HCT116 (cell line): ENCODE measurements at regions of chr12 and their contacts with region 1.

Region 1: DNA sequence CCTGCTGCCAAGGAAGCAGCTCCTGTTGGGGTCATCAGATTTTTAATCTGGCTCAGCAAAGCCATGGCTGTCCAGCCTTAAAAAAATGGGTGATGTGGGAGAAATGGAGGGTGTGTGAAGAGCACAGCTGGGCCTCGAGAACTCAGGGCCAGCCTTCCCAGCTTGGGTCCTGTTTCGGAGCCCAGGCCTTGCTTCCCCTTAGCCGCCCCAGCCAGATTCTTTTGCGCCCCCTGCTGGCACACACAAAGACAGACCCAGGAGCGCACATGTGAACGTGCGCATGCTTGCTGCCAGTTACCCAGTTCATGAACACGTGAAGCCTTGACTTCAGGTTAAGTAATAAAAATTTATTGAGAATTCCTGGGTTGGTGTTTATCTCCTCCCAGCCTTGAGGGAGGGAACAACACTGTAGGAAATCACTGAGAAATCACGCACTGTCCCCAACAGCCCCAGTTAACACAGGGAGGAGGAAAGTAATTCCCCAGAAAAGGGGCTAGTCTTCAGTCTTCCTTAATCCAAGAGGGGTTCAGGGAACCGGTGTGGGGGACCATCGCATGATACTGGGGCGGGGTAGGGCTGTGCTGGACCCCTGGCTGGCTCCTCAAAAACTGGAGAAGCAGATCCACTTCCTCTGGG is 5.3 kb downstream of the PHB2 start:
- DNase-seq: peak; percentile 79
- ATAC-seq: peak; percentile 31
- H3K4me3 ChIP-seq: peak overlapping the region; percentile 96 to 99
- H3K27ac ChIP-seq: peak overlapping the region; percentile 97
- H3K4me1 ChIP-seq: peaks cover 39 to 79% of the 10 kb centered on the region in 2 experiments
- H3K27me3 ChIP-seq: no peaks in the 10 kb centered on the region
- CTCF ChIP-seq: peak in 2 of 3 experiments; percentile 92 to 96; a peak in 4 of 6 replicates
- POLR2A ChIP-seq: peak; percentile 56
- RAD21 ChIP-seq: no peak

Region 2: GRCh38 chr12:6867413-6868210 is 97.5 kb before region 1 on chr12 and contains the start of gene TPI1:
- CTCF ChIA-PET with region 1: interaction called, 18 read pairs
- POLR2A ChIA-PET with region 1: interaction called, 33 read pairs
- RAD21 ChIA-PET with region 1: no interaction called
- intact Hi-C with region 1: no loop called
- DNase-seq: no peak
- ATAC-seq: peak; percentile 73
- H3K4me3 ChIP-seq: peak within 1 kb of the TSS; percentile 97 to 99
- H3K27ac ChIP-seq: peak within 1 kb of the TSS; percentile 96
- H3K4me1 ChIP-seq: peaks cover 33 to 61% of the 10 kb centered on the region in 2 experiments
- H3K27me3 ChIP-seq: no peaks in the 10 kb centered on the region
- CTCF ChIP-seq: no peak
- POLR2A ChIP-seq: peak; percentile 99
- RAD21 ChIP-seq: no peak
- total RNA-seq, gene TPI1: 1,068 TPM

Region 3: DNA sequence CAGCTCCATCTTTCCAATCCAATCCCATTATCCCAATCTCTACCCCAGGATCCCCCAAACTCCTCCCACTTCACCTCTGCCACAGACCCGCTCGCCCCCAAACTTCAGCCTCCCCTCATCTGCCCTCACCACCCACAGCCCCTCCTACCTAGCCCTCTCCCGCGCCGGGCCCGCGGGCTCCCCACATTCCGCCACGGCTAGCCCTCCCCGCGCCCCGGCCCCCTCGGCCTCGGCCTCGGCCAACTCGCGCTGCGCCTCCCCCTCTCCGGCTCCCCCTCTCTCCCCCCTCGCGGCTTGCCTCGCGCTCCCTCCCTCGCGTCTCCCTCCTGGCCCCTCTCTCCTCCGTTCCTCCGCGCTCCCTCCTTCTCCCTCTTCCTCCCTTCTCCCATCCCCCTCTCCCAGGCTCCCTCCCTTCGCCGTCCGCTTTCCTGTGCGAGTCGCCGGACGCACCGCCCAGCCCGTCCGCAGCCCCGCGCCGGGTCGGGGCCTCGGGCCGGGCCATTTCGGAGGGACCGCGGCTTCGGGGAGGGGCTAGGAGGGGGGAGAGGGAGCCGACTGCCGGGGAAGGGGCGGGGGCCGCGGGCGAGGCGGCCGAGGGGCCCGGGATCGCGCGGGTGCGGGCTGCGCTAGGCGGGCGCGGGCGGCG is 37.6 kb before region 1 on chr12 and contains the start of gene ATN1:
- CTCF ChIA-PET with region 1: interaction called, 11 read pairs
- POLR2A ChIA-PET with region 1: interaction called, 15 read pairs
- RAD21 ChIA-PET with region 1: interaction called in 1 of 2 experiments, 3 read pairs
- intact Hi-C with region 1: loop called (anchors 2 kb)
- DNase-seq: no peak
- ATAC-seq: peak; percentile 10
- H3K4me3 ChIP-seq: peak within 1 kb of the TSS; percentile 79 to 92
- H3K27ac ChIP-seq: peak within 1 kb of the TSS; percentile 99
- H3K4me1 ChIP-seq: peaks cover 25 to 53% of the 10 kb centered on the region in 2 experiments
- H3K27me3 ChIP-seq: no peaks in the 10 kb centered on the region
- CTCF ChIP-seq: no peak
- POLR2A ChIP-seq: no peak
- RAD21 ChIP-seq: no peak
- total RNA-seq, gene ATN1: 104 TPM

Region 4: GRCh38 chr12:7042842-7043241 is 77.7 kb after region 1 on chr12:
- CTCF ChIA-PET with region 1: no interaction called
- POLR2A ChIA-PET with region 1: interaction called, 3 read pairs
- RAD21 ChIA-PET with region 1: no interaction called
- intact Hi-C with region 1: loop called (anchors 2 kb)
- DNase-seq: peak; percentile 56
- ATAC-seq: peak; percentile 95
- H3K4me3 ChIP-seq: no peak overlapping the region
- H3K27ac ChIP-seq: no peak overlapping the region
- H3K4me1 ChIP-seq: peaks cover 0 to 9% of the 10 kb centered on the region in 2 experiments; a peak in 1 of 4 replicates
- H3K27me3 ChIP-seq: no peaks in the 10 kb centered on the region
- CTCF ChIP-seq: peak; percentile 43 to 89 (median 63); a peak in 5 of 6 replicates
- POLR2A ChIP-seq: no peak
- RAD21 ChIP-seq: peak; percentile 83

Region 5: GRCh38 chr12:7108796-7109571 is 143.8 kb after region 1 on chr12 and contains the start of gene C1RL:
- CTCF ChIA-PET with region 1: interaction called, 3 read pairs
- POLR2A ChIA-PET with region 1: interaction called, 12 read pairs
- RAD21 ChIA-PET with region 1: no interaction called
- intact Hi-C with region 1: loop called (anchors 1 kb)
- DNase-seq: peak; percentile 50
- ATAC-seq: peak; percentile 69
- H3K4me3 ChIP-seq: peak within 1 kb of the TSS; percentile 85 to 86
- H3K27ac ChIP-seq: peak within 1 kb of the TSS; percentile 88
- H3K4me1 ChIP-seq: peaks cover 4 to 16% of the 10 kb centered on the region in 2 experiments; a peak in 3 of 4 replicates
- H3K27me3 ChIP-seq: no peaks in the 10 kb centered on the region
- CTCF ChIP-seq: peak; percentile 69 to 96 (median 95); a peak in 5 of 6 replicates
- POLR2A ChIP-seq: no peak
- RAD21 ChIP-seq: peak; percentile 71
- total RNA-seq, gene C1RL: 25.9 TPM